B cell (primary cell): ENCODE measurements at regions of chr14 and their contacts with region 1.

Region 1: GRCh38 chr14:20327005-20327869 is 5.8 kb downstream of the CCNB1IP1 start:
- DNase-seq: peak; percentile 81
- ATAC-seq: peak; percentile 67
- H3K4me3 ChIP-seq: no peak overlapping the region
- H3K4me3 Mint-ChIP-seq: peak overlapping the region; percentile 1
- H3K27ac ChIP-seq: no peak overlapping the region
- H3K27ac Mint-ChIP-seq: peak overlapping the region; percentile 33
- H3K4me1 ChIP-seq: peaks cover under 1 to 6% of the 10 kb centered on the region in 2 donors
- H3K4me1 Mint-ChIP-seq: peaks cover 30% of the 10 kb centered on the region
- H3K27me3 ChIP-seq: no peaks in the 10 kb centered on the region
- H3K27me3 Mint-ChIP-seq: no peaks in the 10 kb centered on the region
- CTCF ChIP-seq: peak; percentile 91

Region 2: GRCh38 chr14:20305265-20306078 is 21.8 kb before region 1 on chr14 and contains the start of gene TTC5:
- CTCF ChIA-PET with region 1: interaction called, 4 read pairs
- POLR2A ChIA-PET with region 1: no interaction called
- intact Hi-C with region 1: loop called (anchors 2 kb)
- DNase-seq: peak; percentile 94
- ATAC-seq: peak; percentile 100
- H3K4me3 ChIP-seq: peak within 1 kb of the TSS; percentile 72 to 96 (median 95)
- H3K4me3 Mint-ChIP-seq: peak within 1 kb of the TSS; percentile 89
- H3K27ac ChIP-seq: peak within 1 kb of the TSS in 1 of 2 donors; percentile 35
- H3K27ac Mint-ChIP-seq: peak within 1 kb of the TSS; percentile 85
- H3K4me1 ChIP-seq: peaks cover 6 to 14% of the 10 kb centered on the region in 2 donors
- H3K4me1 Mint-ChIP-seq: peaks cover 24% of the 10 kb centered on the region
- H3K27me3 ChIP-seq: no peaks in the 10 kb centered on the region
- H3K27me3 Mint-ChIP-seq: no peaks in the 10 kb centered on the region
- CTCF ChIP-seq: peak; percentile 87
- total RNA-seq, gene TTC5: 37.5 and 38.8 TPM in 2 replicates

Region 3: DNA sequence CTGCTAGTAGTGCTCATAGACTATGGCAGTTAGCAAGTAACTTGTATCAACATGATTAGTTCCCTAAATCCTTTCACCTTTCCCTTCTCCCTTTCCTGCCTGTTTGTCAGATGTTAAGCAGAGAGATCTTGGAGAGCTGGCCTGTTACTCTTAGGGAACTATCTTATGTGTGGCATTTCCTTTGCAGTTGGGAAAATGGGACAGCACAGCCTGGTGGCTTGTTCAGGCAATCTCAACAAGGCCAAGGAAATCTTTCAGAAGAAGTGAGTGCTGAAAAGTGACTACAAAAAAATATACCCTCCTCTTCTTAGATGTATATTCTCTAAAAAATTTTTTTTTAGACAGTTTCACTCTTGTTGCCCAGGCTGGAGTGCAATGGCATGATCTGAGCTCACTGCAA is 23.6 kb after region 1 on chr14:
- CTCF ChIA-PET with region 1: interaction called, 36 read pairs
- POLR2A ChIA-PET with region 1: interaction called, 5 read pairs
- intact Hi-C with region 1: no loop called
- DNase-seq: no peak
- ATAC-seq: no peak
- H3K4me3 ChIP-seq: no peak overlapping the region
- H3K4me3 Mint-ChIP-seq: no peak overlapping the region
- H3K27ac ChIP-seq: no peak overlapping the region
- H3K27ac Mint-ChIP-seq: peak overlapping the region; percentile 43
- H3K4me1 ChIP-seq: no peaks in the 10 kb centered on the region
- H3K4me1 Mint-ChIP-seq: no peaks in the 10 kb centered on the region
- H3K27me3 ChIP-seq: no peaks in the 10 kb centered on the region
- H3K27me3 Mint-ChIP-seq: no peaks in the 10 kb centered on the region
- CTCF ChIP-seq: no peak

Region 4: DNA sequence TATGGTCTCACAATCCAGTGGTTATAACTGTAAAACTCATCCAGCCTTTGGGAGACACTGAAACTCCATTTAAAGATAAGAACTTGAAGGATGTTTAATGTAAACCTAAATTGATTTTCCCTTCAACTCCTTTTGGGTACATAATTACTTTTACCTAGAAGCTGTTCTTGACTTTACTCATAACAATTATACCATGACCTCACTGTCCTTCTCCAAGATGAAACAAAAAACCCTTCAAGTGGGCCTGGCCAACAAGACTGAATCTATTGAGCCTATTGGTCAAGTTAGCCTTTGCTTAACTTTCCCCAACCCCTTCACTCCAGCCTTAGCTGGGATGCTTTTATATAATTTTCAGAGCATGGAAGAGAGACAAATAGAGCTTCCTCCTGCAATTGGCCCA is 38.7 kb after region 1 on chr14:
- CTCF ChIA-PET with region 1: interaction called, 13 read pairs
- POLR2A ChIA-PET with region 1: no interaction called
- intact Hi-C with region 1: no loop called
- DNase-seq: no peak
- ATAC-seq: no peak
- H3K4me3 ChIP-seq: no peak overlapping the region
- H3K4me3 Mint-ChIP-seq: no peak overlapping the region
- H3K27ac ChIP-seq: peak overlapping the region in 1 of 2 donors; percentile 4
- H3K27ac Mint-ChIP-seq: peak overlapping the region; percentile 29
- H3K4me1 ChIP-seq: no peaks in the 10 kb centered on the region
- H3K4me1 Mint-ChIP-seq: peaks cover 5% of the 10 kb centered on the region
- H3K27me3 ChIP-seq: no peaks in the 10 kb centered on the region
- H3K27me3 Mint-ChIP-seq: no peaks in the 10 kb centered on the region
- CTCF ChIP-seq: no peak

Region 5: DNA sequence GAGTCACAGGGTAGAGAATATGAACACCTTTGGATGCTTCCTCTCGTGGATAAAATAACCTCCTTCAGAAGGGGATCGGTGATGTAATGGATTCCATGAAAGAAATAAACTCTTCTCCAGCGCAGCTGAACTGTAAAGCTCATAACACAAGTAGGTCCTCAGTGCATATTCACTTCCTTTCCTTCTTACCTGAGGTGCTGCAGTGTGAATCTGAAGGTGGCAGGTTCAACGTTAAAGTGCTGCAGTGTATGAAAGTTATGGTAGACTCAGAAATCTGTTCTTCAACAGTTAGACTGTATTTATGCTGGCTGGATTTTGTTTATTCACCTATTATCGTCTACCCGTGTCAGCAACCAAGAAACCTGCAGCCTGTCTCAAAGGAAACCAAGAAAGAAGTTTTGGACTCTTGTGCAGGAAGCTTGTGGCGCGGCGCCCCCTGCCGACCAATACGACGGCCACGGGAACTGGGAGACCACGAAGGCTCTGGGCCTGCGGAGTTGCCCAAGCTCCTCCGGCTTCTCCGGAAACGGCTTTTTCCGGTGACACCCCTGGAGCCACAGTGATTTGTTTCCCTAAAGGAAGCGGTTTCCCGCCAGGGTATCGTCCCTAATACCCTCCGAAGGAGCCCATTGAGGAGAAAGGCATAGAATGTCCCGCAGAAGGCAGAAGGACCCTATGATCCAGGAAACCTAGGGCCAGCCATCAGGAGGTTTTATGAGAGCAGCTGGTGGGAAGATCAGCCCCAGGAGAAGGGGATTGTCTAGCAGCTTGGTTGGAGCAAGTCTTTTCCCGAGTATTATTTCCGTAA is 546.3 kb after region 1 on chr14:
- CTCF ChIA-PET with region 1: no interaction called
- POLR2A ChIA-PET with region 1: interaction called, 3 read pairs
- intact Hi-C with region 1: loop called (anchors 5 kb)
- DNase-seq: peak; percentile 77
- ATAC-seq: peak; percentile 56
- H3K4me3 ChIP-seq: peak overlapping the region in 1 of 5 experiments; percentile 26
- H3K4me3 Mint-ChIP-seq: peak overlapping the region; percentile 54
- H3K27ac ChIP-seq: no peak overlapping the region
- H3K27ac Mint-ChIP-seq: no peak overlapping the region
- H3K4me1 ChIP-seq: peaks cover 6 to 9% of the 10 kb centered on the region in 2 donors
- H3K4me1 Mint-ChIP-seq: peaks cover 13% of the 10 kb centered on the region
- H3K27me3 ChIP-seq: peaks cover 0 to 17% (median 2%) of the 10 kb centered on the region in 4 experiments
- H3K27me3 Mint-ChIP-seq: peaks cover 37% of the 10 kb centered on the region
- CTCF ChIP-seq: peak; percentile 82